IMR-90 (cell line): ENCODE measurements at regions of chr7 and their contacts with region 1.

Region 1: DNA sequence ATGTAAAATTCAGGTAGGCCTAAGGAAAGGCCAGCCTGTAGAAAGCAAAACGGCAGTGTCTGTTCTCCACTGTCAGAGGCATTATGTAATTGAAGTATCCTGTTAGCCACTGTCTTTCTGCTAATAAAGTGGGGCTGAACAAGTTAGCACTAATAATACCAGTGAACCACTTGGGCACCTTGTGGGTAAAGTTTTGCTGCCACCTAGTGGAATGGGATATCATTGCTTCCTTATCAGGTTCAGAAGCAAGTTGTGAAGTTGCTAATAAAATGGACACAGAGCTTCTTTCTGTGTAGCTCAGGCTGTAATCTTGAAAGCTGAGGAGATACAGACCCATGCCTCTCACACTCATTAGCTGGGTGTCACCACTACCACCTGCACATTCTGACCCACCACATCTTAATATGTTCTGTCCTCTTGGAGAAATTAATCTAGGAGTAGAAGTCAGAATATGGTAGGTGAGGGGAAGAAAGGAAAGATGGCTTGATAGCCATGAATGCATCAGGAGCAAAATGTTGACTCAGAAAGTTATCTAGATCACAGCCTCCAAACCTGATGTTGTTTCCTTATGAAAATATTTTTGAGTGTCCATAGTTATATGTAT is 175.1 kb downstream of the SEPTIN7 start:
- DNase-seq: peak; percentile 77
- ATAC-seq: peak; percentile 91
- H3K4me3 ChIP-seq: no peak overlapping the region
- H3K27ac ChIP-seq: no peak overlapping the region
- H3K4me1 ChIP-seq: no peaks in the 10 kb centered on the region
- H3K27me3 ChIP-seq: peaks cover 30% of the 10 kb centered on the region
- CTCF ChIP-seq: peak; percentile 81
- POLR2A ChIP-seq: no peak
- RAD21 ChIP-seq: peak; percentile 82

Region 2: GRCh38 chr7:35185907-35186731 is 789.8 kb before region 1 on chr7:
- CTCF ChIA-PET with region 1: no interaction called
- POLR2A ChIA-PET with region 1: no interaction called
- dilution Hi-C with region 1: no loop called
- in situ Hi-C with region 1: no loop called
- intact Hi-C with region 1: loop called (anchors 10 kb)
- DNase-seq: peak; percentile 8
- ATAC-seq: peak; percentile 72
- H3K4me3 ChIP-seq: peak overlapping the region; percentile 42
- H3K27ac ChIP-seq: no peak overlapping the region
- H3K4me1 ChIP-seq: no peaks in the 10 kb centered on the region
- H3K27me3 ChIP-seq: peaks cover 8% of the 10 kb centered on the region; the same call in 1 of the 2 replicates
- CTCF ChIP-seq: no peak
- POLR2A ChIP-seq: no peak
- RAD21 ChIP-seq: no peak

Region 3: GRCh38 chr7:35424869-35425495 is 551.0 kb before region 1 on chr7:
- CTCF ChIA-PET with region 1: no interaction called
- POLR2A ChIA-PET with region 1: no interaction called
- dilution Hi-C with region 1: no loop called
- in situ Hi-C with region 1: no loop called
- intact Hi-C with region 1: loop called (anchors 2 kb)
- DNase-seq: peak; percentile 43
- ATAC-seq: peak; percentile 89
- H3K4me3 ChIP-seq: no peak overlapping the region
- H3K27ac ChIP-seq: no peak overlapping the region
- H3K4me1 ChIP-seq: no peaks in the 10 kb centered on the region
- H3K27me3 ChIP-seq: no peaks in the 10 kb centered on the region
- CTCF ChIP-seq: peak; percentile 75
- POLR2A ChIP-seq: no peak
- RAD21 ChIP-seq: peak; percentile 57

Region 4: DNA sequence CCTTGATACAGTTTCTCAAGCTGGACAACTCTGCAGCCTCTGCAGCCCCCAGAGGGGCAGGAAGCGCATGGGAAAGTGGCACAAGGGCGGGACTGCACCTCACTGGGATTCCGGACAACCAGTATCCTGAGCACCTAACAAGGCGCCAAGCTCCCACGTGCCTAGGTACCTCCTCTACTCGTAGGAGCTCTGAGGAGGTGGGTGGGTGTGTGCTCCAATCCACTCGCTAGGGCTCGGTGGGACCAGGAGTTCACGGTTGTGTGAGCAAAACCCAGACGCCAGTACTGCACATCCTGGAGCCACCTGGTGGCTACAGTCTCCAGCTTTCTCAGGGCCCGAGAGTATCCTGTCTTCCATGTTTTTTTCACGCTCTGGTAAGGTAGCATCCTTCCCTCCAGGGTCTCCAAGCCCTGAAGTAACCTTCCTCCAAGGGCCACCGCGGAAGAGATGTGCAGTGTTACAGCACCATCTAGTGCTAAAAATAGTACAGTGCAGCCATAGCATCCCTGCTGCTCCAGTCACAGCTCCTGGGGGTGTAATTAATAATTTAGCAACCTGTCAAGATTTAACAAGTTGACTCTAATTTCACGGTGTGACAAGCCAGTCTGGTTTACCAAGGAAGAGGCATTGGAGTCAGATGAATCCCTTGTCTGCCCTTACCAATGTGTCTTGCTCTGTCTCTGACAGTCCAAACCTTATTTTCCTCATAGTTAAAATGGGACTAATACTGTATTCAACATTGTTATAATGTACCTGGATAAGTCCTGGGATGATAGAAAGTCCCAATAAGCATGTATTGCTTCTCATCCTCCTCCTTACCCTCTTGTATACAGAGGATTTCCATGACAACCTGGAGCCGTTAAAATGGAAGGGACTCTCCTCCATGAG is 351.4 kb before region 1 on chr7:
- CTCF ChIA-PET with region 1: no interaction called
- POLR2A ChIA-PET with region 1: no interaction called
- dilution Hi-C with region 1: no loop called
- in situ Hi-C with region 1: no loop called
- intact Hi-C with region 1: loop called (anchors 5 kb)
- DNase-seq: peak; percentile 29
- ATAC-seq: peak; percentile 97
- H3K4me3 ChIP-seq: no peak overlapping the region
- H3K27ac ChIP-seq: no peak overlapping the region
- H3K4me1 ChIP-seq: no peaks in the 10 kb centered on the region; the same call in 1 of the 2 replicates
- H3K27me3 ChIP-seq: no peaks in the 10 kb centered on the region
- CTCF ChIP-seq: peak; percentile 79
- POLR2A ChIP-seq: no peak
- RAD21 ChIP-seq: peak; percentile 82

Region 5: DNA sequence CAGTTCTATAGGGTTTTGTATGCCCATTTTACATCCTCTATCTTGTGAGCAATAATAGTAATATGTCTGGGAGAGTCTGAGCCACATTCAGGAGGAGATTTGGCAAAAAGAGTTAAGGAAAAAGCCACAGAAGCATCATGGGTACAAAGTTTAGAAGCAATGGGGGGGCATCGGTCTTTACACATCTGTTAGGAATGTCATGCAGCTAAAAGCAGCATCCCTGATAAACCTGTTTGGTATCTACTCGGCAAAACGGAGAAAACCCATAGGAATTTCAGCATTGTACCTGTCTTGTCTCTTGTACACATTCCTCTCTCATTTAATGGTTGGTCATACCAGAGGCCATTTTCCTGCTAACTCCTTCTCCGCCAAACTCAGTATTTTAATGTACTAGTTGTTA is 268.5 kb before region 1 on chr7:
- CTCF ChIA-PET with region 1: no interaction called
- POLR2A ChIA-PET with region 1: no interaction called
- dilution Hi-C with region 1: no loop called
- in situ Hi-C with region 1: loop called (anchors 10 kb)
- intact Hi-C with region 1: loop called (anchors 5 kb)
- DNase-seq: peak; percentile 60
- ATAC-seq: 0 out of 2 replicates have a peak, but pooled peaks have one; percentile 15
- H3K4me3 ChIP-seq: no peak overlapping the region
- H3K27ac ChIP-seq: no peak overlapping the region
- H3K4me1 ChIP-seq: peaks cover 7% of the 10 kb centered on the region
- H3K27me3 ChIP-seq: no peaks in the 10 kb centered on the region
- CTCF ChIP-seq: no peak
- POLR2A ChIP-seq: no peak
- RAD21 ChIP-seq: no peak

Region 6: DNA sequence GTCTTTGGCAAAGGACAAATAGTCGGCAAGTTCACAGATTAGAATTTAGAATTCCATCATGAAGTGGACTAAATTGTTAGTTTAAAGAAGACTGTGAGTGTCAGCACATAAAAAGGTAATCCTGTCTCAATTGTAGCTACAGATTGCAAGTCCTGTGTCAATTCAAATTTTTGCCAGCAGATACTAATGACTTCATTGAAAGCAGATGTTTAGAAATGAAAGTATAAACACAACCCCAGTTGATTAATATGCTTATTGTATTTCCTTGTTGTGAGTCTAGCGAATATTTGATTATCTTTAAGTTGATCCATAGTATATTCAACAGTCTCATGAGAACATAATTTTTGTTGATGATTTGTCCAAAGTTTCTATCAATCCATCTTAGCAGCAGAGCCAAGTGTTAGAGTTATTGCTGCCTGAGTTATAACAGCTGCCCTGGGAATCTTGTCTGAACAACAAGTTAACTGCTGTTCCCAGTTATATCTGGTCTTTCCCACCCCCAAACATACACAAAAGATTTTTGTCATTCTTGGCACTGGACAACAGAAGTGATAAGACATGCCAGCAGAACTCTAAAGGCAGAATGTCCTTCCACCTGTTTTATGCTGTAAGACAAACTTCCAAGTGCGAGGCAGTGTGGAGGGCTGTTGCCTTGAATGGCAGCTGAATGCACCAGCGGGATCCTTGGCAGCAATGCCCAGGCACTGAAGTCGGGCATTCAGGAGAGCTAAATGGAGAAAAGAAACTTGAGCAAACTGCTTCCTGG is 259.7 kb before region 1 on chr7:
- CTCF ChIA-PET with region 1: no interaction called
- POLR2A ChIA-PET with region 1: no interaction called
- dilution Hi-C with region 1: no loop called
- in situ Hi-C with region 1: loop called (anchors 10 kb)
- intact Hi-C with region 1: no loop called
- DNase-seq: peak; percentile 54
- ATAC-seq: peak; percentile 74
- H3K4me3 ChIP-seq: no peak overlapping the region
- H3K27ac ChIP-seq: peak overlapping the region; percentile 15; the same call in 1 of the 2 replicates
- H3K4me1 ChIP-seq: peaks cover 4% of the 10 kb centered on the region; the same call in 1 of the 2 replicates
- H3K27me3 ChIP-seq: no peaks in the 10 kb centered on the region; the same call in 1 of the 2 replicates
- CTCF ChIP-seq: no peak
- POLR2A ChIP-seq: no peak
- RAD21 ChIP-seq: no peak

Region 7: DNA sequence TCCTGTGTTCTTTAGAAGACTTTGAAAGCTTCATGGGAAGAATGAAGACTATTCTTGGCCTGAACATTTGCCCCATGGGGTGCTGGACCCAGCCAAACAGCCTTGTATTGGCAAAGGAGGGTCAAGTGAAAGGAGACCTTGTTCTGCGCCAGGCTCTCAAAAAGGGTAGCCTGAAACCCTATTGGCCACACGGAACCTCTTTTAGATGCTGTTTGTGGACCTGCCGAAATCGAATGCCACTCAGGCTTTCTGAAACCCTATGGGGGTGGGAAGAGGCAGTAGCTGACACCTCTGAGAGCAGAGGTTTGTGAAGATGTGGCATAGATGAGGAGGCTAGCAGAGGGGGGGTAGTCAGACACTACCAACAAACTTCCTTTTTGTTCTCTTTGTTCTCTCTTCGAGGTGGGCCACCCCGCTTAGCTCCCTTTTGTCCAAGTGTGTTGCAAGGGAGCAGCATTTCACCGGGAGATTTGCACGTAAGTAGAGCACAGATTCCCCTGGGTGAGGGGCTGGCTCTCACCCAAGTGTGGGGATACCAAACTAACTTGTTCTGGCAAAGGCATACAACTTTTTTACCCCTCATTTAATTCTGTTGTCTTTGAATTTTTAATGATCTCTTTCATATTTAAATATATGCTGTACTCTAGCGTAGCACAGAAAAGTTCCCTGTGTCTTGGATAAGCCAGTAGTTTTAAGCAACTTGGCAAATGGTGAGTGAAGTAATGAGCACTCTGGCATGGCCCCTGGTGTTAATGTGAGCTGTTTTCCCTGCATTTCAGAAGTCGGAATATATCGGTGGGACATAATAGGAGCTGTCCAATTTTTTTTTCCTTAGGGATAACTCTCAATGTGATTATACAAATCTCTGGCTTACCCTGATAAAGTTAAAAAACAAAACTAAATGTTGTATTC is 67.4 kb before region 1 on chr7:
- CTCF ChIA-PET with region 1: no interaction called
- POLR2A ChIA-PET with region 1: no interaction called
- dilution Hi-C with region 1: no loop called
- in situ Hi-C with region 1: no loop called
- intact Hi-C with region 1: no loop called
- DNase-seq: no peak
- ATAC-seq: no peak
- H3K4me3 ChIP-seq: no peak overlapping the region
- H3K27ac ChIP-seq: no peak overlapping the region
- H3K4me1 ChIP-seq: peaks cover 2% of the 10 kb centered on the region; the same call in 1 of the 2 replicates
- H3K27me3 ChIP-seq: no peaks in the 10 kb centered on the region
- CTCF ChIP-seq: no peak
- POLR2A ChIP-seq: no peak
- RAD21 ChIP-seq: no peak